ENCODE measurements at regions of chr15 and their contacts with region 1.

Region 1: GRCh38 chr15:92881802-92882696 is 18.1 kb upstream of the CHD2 start:
- DNase-seq: peak in 33 of 35 experiments; percentile 95 to 100 (median 98)
- ATAC-seq: peak; percentile 89 to 91 (median 90)
- H3K4me3 ChIP-seq: peak overlapping the region; percentile 20 to 42
- H3K4me3 Mint-ChIP-seq: peak overlapping the region; percentile 85 to 93 (median 86)
- H3K27ac ChIP-seq: peak overlapping the region; percentile 85
- H3K27ac Mint-ChIP-seq: peak overlapping the region; percentile 99
- H3K4me1 ChIP-seq: peaks cover 36 to 52% of the 10 kb centered on the region in 2 experiments
- H3K4me1 Mint-ChIP-seq: peaks cover 62 to 76% (median 63%) of the 10 kb centered on the region in 3 donors
- H3K27me3 ChIP-seq: no peaks in the 10 kb centered on the region
- H3K27me3 Mint-ChIP-seq: no peaks in the 10 kb centered on the region

Region 2: GRCh38 chr15:92123962-92124656 is 757.9 kb before region 1 on chr15:
- CTCF ChIA-PET with region 1: no interaction called
- POLR2A ChIA-PET with region 1: no interaction called
- DNase-seq: no peak
- ATAC-seq: no peak
- H3K4me3 ChIP-seq: no peak overlapping the region
- H3K4me3 Mint-ChIP-seq: no peak overlapping the region
- H3K27ac ChIP-seq: no peak overlapping the region
- H3K27ac Mint-ChIP-seq: no peak overlapping the region
- H3K4me1 ChIP-seq: no peaks in the 10 kb centered on the region
- H3K4me1 Mint-ChIP-seq: peaks cover 0 to 2% (median 0%) of the 10 kb centered on the region in 3 donors
- H3K27me3 ChIP-seq: no peaks in the 10 kb centered on the region
- H3K27me3 Mint-ChIP-seq: no peaks in the 10 kb centered on the region

Region 3: DNA sequence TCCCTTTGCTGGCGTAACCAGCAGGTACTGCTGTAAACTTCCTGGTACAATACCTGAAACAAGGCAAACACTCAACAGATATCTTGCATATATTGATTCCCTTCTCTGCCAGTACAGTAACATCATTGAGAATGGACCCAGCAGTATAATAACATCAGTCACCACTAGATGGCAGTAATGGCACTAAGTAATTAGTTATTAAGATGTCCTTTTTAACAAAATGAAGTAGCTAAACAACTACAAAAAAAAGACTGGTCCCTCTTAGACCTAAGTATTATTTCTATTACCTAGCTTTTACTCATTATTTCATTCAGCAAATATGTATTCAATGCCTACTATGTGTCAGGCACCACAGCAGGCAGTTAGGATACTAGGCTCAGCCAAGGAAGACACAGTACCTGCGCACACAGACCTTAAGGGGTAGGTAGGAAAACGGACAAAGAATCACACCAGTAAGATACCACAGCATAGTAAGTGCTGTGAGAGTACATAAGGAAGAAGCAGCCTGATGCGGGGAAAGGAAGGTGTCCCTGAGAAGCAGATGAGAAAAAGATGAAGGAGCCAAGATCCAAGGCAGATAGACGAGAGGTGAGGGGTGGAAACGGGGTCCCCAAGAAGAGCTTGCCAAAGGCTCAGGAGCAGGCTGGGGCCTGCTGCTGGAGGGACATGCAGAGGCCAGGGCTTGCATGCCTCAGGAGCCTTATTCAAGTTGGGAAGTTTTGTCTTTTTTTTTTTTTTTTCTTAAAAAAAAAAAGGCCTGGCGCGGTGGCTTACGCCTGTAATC is 84.7 kb before region 1 on chr15:
- CTCF ChIA-PET with region 1: interaction called, 5 to 26 read pairs
- POLR2A ChIA-PET with region 1: interaction called in 1 of 2 experiments, 6 read pairs
- DNase-seq: peak in 11 of 35 experiments; percentile 9 to 90 (median 30)
- ATAC-seq: peak; percentile 74 to 87 (median 86)
- H3K4me3 ChIP-seq: no peak overlapping the region
- H3K4me3 Mint-ChIP-seq: no peak overlapping the region
- H3K27ac ChIP-seq: no peak overlapping the region
- H3K27ac Mint-ChIP-seq: peak overlapping the region; percentile 56 to 87
- H3K4me1 ChIP-seq: no peaks in the 10 kb centered on the region
- H3K4me1 Mint-ChIP-seq: peaks cover 5 to 10% (median 6%) of the 10 kb centered on the region in 3 donors
- H3K27me3 ChIP-seq: no peaks in the 10 kb centered on the region
- H3K27me3 Mint-ChIP-seq: no peaks in the 10 kb centered on the region

Region 4: GRCh38 chr15:92820236-92821021 is 61.6 kb before region 1 on chr15:
- CTCF ChIA-PET with region 1: interaction called, 3 to 14 read pairs
- POLR2A ChIA-PET with region 1: interaction called, 4 to 47 read pairs
- DNase-seq: peak; percentile 64 to 93 (median 78)
- ATAC-seq: peak; percentile 84 to 92 (median 89)
- H3K4me3 ChIP-seq: peak overlapping the region; percentile 49 to 67
- H3K4me3 Mint-ChIP-seq: peak overlapping the region; percentile 86 to 91 (median 88)
- H3K27ac ChIP-seq: peak overlapping the region; percentile 93
- H3K27ac Mint-ChIP-seq: peak overlapping the region; percentile 89 to 94
- H3K4me1 ChIP-seq: peaks cover 41 to 44% of the 10 kb centered on the region in 2 experiments
- H3K4me1 Mint-ChIP-seq: peaks cover 59 to 67% (median 61%) of the 10 kb centered on the region in 3 donors
- H3K27me3 ChIP-seq: no peaks in the 10 kb centered on the region
- H3K27me3 Mint-ChIP-seq: no peaks in the 10 kb centered on the region

Region 5: DNA sequence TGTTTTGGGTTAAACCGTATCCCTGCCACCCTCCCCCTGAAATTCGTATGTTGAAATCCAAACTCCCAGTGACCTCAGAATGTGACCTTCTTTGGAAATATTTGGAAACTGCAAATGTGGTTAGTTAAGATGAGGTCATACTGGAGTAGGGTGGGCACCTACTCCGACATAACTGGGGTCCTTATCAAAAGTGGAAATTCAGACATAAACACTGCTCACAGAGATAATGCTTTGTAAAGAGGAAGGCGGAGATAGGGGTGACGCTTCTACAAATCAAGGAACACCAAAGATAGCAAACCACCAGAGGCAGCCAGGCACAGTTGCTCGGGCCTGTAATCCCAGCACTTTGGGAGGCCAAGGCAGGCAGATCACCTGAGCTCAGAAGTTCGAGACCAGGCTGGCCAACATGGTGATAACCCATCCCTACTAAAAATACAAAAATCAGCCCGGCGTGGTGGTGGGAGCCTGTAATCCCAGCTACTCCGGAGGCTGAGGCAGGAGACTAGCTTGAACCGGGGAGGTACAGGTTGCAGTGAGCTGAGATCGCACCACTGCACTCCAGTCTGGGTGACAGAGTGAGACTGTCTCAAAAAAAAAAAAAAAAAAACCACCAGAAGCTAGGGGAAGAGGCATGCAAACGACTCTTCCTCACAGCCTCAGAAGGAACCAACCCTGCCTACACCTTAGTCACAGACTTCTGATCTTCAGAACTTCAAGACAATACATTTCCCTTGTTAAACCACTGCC is 33.0 kb before region 1 on chr15:
- CTCF ChIA-PET with region 1: interaction called in 1 of 2 experiments, 3 read pairs
- POLR2A ChIA-PET with region 1: interaction called, 6 to 13 read pairs
- DNase-seq: peak in 28 of 35 experiments; percentile 14 to 79 (median 28)
- ATAC-seq: peak; percentile 90 to 97 (median 93)
- H3K4me3 ChIP-seq: peak overlapping the region in 1 of 2 donors; percentile 32
- H3K4me3 Mint-ChIP-seq: peak overlapping the region; percentile 24 to 58 (median 39)
- H3K27ac ChIP-seq: peak overlapping the region; percentile 74
- H3K27ac Mint-ChIP-seq: peak overlapping the region; percentile 100
- H3K4me1 ChIP-seq: peaks cover 42 to 46% of the 10 kb centered on the region in 2 experiments
- H3K4me1 Mint-ChIP-seq: peaks cover 46 to 70% (median 67%) of the 10 kb centered on the region in 3 donors
- H3K27me3 ChIP-seq: no peaks in the 10 kb centered on the region
- H3K27me3 Mint-ChIP-seq: no peaks in the 10 kb centered on the region

Region 6: GRCh38 chr15:92903941-92904831 is 22.1 kb after region 1 on chr15:
- CTCF ChIA-PET with region 1: interaction called in 1 of 2 experiments, 38 read pairs
- POLR2A ChIA-PET with region 1: interaction called, 19 to 372 read pairs
- DNase-seq: peak; percentile 96 to 100 (median 99)
- ATAC-seq: peak; percentile 84 to 89 (median 87)
- H3K4me3 ChIP-seq: peak overlapping the region; percentile 87 to 88
- H3K4me3 Mint-ChIP-seq: peak overlapping the region; percentile 93 to 99 (median 99)
- H3K27ac ChIP-seq: peak overlapping the region; percentile 96
- H3K27ac Mint-ChIP-seq: peak overlapping the region; percentile 100
- H3K4me1 ChIP-seq: peaks cover 22 to 59% of the 10 kb centered on the region in 2 experiments
- H3K4me1 Mint-ChIP-seq: peaks cover 62 to 82% (median 68%) of the 10 kb centered on the region in 3 donors
- H3K27me3 ChIP-seq: no peaks in the 10 kb centered on the region
- H3K27me3 Mint-ChIP-seq: no peaks in the 10 kb centered on the region

Region 7: GRCh38 chr15:93001881-93002280 is 119.8 kb after region 1 on chr15:
- CTCF ChIA-PET with region 1: no interaction called
- POLR2A ChIA-PET with region 1: no interaction called
- DNase-seq: no peak
- ATAC-seq: no peak
- H3K4me3 ChIP-seq: no peak overlapping the region
- H3K4me3 Mint-ChIP-seq: no peak overlapping the region
- H3K27ac ChIP-seq: no peak overlapping the region
- H3K27ac Mint-ChIP-seq: peak overlapping the region; percentile 53 to 78
- H3K4me1 ChIP-seq: peaks cover 0 to 8% of the 10 kb centered on the region in 2 experiments
- H3K4me1 Mint-ChIP-seq: peaks cover 4 to 21% (median 18%) of the 10 kb centered on the region in 3 donors
- H3K27me3 ChIP-seq: no peaks in the 10 kb centered on the region
- H3K27me3 Mint-ChIP-seq: no peaks in the 10 kb centered on the region

Measured in T-cell (primary cell).